AG04449 (cell line): ENCODE measurements at regions of chr1 and their contacts with region 1.

Region 1: DNA sequence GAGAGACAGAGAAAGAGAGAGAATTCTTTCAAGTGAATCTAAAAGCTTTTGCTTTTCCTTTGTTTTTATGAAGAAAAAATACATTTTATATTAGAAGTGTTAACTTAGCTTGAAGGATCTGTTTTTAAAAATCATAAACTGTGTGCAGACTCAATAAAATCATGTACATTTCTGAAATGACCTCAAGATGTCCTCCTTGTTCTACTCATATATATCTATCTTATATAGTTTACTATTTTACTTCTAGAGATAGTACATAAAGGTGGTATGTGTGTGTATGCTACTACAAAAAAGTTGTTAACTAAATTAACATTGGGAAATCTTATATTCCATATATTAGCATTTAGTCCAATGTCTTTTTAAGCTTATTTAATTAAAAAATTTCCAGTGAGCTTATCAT is 117.6 kb downstream of the PTPRC start:
- DNase-seq: no peak
- H3K4me3 ChIP-seq: no peak overlapping the region
- CTCF ChIP-seq: no peak

Region 2: DNA sequence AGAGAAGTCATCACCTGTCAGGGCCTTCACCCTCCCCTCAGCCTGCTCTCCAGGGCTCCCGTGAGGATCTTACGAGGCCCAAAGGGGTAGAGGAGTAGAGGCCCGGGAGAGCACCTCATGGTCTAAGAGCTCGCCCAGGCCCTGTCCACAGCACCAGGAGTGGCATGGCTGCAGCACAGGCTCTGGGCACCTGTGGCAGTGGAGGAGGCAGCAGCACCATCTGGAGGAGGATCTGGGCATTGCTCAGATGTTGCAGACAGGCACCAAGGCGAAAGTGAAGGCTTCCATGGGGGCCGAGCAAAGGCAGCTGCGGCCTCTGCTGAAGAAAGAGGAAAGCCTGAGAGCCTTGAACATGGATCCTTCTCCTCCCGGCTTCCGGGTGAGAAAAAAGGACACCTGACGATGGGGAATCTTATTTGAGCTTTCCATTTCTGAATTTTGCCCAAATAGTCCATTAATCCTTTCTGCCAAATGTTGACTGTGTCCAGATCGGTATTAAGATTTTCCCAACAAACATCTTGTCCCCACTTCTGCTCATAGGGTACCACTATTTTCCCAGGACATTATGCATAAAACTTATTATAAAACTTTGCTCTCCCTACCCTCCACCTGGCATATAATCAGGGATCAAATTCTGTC is 487.1 kb after region 1 on chr1:
- CTCF ChIA-PET with region 1: interaction called, 18 read pairs
- POLR2A ChIA-PET with region 1: no interaction called
- DNase-seq: no peak
- H3K4me3 ChIP-seq: no peak overlapping the region
- CTCF ChIP-seq: peak; percentile 73

Region 3: DNA sequence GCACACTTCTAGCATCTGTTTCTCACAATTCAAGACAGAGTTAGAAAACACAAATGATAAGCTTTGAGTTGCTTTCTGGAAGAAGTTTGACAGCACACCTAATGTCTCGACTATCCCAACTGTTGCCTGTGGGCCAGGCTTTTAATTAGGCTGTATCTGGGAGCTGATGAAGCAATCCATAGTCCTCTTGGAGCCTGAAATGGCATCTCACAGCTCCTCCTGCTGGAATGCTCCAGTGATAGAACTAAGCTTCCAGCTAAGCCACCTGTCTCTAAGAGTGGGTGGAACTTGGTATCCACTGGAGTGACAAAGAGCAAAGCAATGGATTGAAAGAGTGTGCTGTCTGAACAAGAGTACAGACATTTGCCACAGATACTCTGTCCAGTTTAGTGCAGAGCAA is 665.7 kb after region 1 on chr1:
- CTCF ChIA-PET with region 1: interaction called, 11 read pairs
- POLR2A ChIA-PET with region 1: no interaction called
- DNase-seq: no peak
- H3K4me3 ChIP-seq: no peak overlapping the region
- CTCF ChIP-seq: peak; percentile 25

Region 4: GRCh38 chr1:199463521-199464128 is 707.2 kb after region 1 on chr1:
- CTCF ChIA-PET with region 1: interaction called, 37 read pairs
- POLR2A ChIA-PET with region 1: no interaction called
- DNase-seq: peak; percentile 10
- H3K4me3 ChIP-seq: no peak overlapping the region
- CTCF ChIP-seq: peak; percentile 52

Region 5: GRCh38 chr1:199551967-199552565 is 795.6 kb after region 1 on chr1:
- CTCF ChIA-PET with region 1: interaction called, 38 read pairs
- POLR2A ChIA-PET with region 1: no interaction called
- DNase-seq: peak; percentile 9
- H3K4me3 ChIP-seq: no peak overlapping the region
- CTCF ChIP-seq: peak; percentile 48